Mammary epithelial cell (primary cell): ENCODE measurements at regions of chr2 and their contacts with region 1.

Region 1: GRCh38 chr2:163345908-163346573 is 389.8 kb downstream of the FIGN start:
- DNase-seq: peak; percentile 66
- H3K4me3 ChIP-seq: no peak overlapping the region
- H3K27ac ChIP-seq: no peak overlapping the region
- H3K4me1 ChIP-seq: peaks cover 15% of the 10 kb centered on the region
- H3K27me3 ChIP-seq: no peaks in the 10 kb centered on the region
- CTCF ChIP-seq: peak; percentile 72 to 77

Region 2: GRCh38 chr2:163191372-163191771 is 154.7 kb before region 1 on chr2:
- CTCF ChIA-PET with region 1: interaction called, 4 read pairs
- dilution Hi-C with region 1: no loop called
- in situ Hi-C with region 1: no loop called
- intact Hi-C with region 1: loop called (anchors 2 kb)
- DNase-seq: peak; percentile 32
- H3K4me3 ChIP-seq: no peak overlapping the region
- H3K27ac ChIP-seq: no peak overlapping the region
- H3K4me1 ChIP-seq: peaks cover 5% of the 10 kb centered on the region
- H3K27me3 ChIP-seq: no peaks in the 10 kb centered on the region
- CTCF ChIP-seq: peak; percentile 72 to 74

Region 3: DNA sequence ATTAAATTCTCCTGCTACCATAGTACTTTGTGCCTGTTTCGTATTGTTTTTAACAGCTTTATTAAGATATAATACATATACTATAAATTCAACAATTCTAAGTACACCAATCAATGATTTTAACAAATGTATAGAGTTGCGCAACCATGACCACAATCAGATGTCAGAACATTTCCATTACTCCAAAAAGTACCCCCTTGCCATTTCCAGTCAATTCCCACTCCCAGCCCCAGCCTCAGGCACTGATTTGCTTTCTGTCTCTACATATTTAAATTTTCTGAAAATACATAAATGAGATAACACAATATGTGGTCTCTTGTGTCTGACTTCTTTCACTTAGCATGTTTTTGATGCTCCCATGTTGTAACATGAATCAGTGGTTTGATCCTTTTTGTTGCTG is 195.9 kb after region 1 on chr2:
- CTCF ChIA-PET with region 1: no interaction called
- dilution Hi-C with region 1: no loop called
- in situ Hi-C with region 1: no loop called
- intact Hi-C with region 1: no loop called
- DNase-seq: no peak
- H3K4me3 ChIP-seq: no peak overlapping the region
- H3K27ac ChIP-seq: no peak overlapping the region
- H3K4me1 ChIP-seq: no peaks in the 10 kb centered on the region
- H3K27me3 ChIP-seq: no peaks in the 10 kb centered on the region
- CTCF ChIP-seq: no peak

Region 4: GRCh38 chr2:163667064-163667887 is 321.2 kb after region 1 on chr2:
- CTCF ChIA-PET with region 1: no interaction called
- dilution Hi-C with region 1: no loop called
- in situ Hi-C with region 1: no loop called
- intact Hi-C with region 1: loop called (anchors 10 kb)
- DNase-seq: peak; percentile 68
- H3K4me3 ChIP-seq: no peak overlapping the region
- H3K27ac ChIP-seq: peak overlapping the region; percentile 63
- H3K4me1 ChIP-seq: peaks cover 44% of the 10 kb centered on the region
- H3K27me3 ChIP-seq: no peaks in the 10 kb centered on the region
- CTCF ChIP-seq: no peak

Region 5: GRCh38 chr2:163878531-163879117 is 532.6 kb after region 1 on chr2:
- CTCF ChIA-PET with region 1: interaction called, 3 read pairs
- dilution Hi-C with region 1: no loop called
- in situ Hi-C with region 1: no loop called
- intact Hi-C with region 1: loop called (anchors 1 kb)
- DNase-seq: peak; percentile 9
- H3K4me3 ChIP-seq: no peak overlapping the region
- H3K27ac ChIP-seq: no peak overlapping the region
- H3K4me1 ChIP-seq: no peaks in the 10 kb centered on the region
- H3K27me3 ChIP-seq: no peaks in the 10 kb centered on the region
- CTCF ChIP-seq: peak; percentile 88 to 89